ENCODE measurements at regions of chr7 and their contacts with region 1.

Region 1: GRCh38 chr7:56074371-56074791 is 10.3 kb downstream of the SUMF2 start:
- DNase-seq: peak; percentile 44
- H3K4me3 ChIP-seq: no peak overlapping the region
- H3K27ac ChIP-seq: no peak overlapping the region
- H3K27me3 ChIP-seq: no peaks in the 10 kb centered on the region
- CTCF ChIP-seq: peak; percentile 96

Region 2: GRCh38 chr7:55449205-55449991 is 625.0 kb before region 1 on chr7:
- CTCF ChIA-PET with region 1: no interaction called
- POLR2A ChIA-PET with region 1: no interaction called
- DNase-seq: no peak
- H3K4me3 ChIP-seq: no peak overlapping the region
- H3K27ac ChIP-seq: no peak overlapping the region
- H3K27me3 ChIP-seq: no peaks in the 10 kb centered on the region
- CTCF ChIP-seq: no peak

Region 3: GRCh38 chr7:55975988-55976633 is 98.3 kb before region 1 on chr7:
- CTCF ChIA-PET with region 1: interaction called, 15 read pairs
- POLR2A ChIA-PET with region 1: no interaction called
- DNase-seq: no peak
- H3K4me3 ChIP-seq: no peak overlapping the region
- H3K27ac ChIP-seq: no peak overlapping the region
- H3K27me3 ChIP-seq: no peaks in the 10 kb centered on the region
- CTCF ChIP-seq: no peak

Region 4: GRCh38 chr7:56019501-56019900 is 54.9 kb before region 1 on chr7:
- CTCF ChIA-PET with region 1: interaction called, 11 read pairs
- POLR2A ChIA-PET with region 1: no interaction called
- DNase-seq: no peak
- H3K4me3 ChIP-seq: no peak overlapping the region
- H3K27ac ChIP-seq: no peak overlapping the region
- H3K27me3 ChIP-seq: no peaks in the 10 kb centered on the region
- CTCF ChIP-seq: no peak

Region 5: GRCh38 chr7:56040734-56041133 is 33.6 kb before region 1 on chr7:
- CTCF ChIA-PET with region 1: interaction called, 13 read pairs
- POLR2A ChIA-PET with region 1: no interaction called
- DNase-seq: no peak
- H3K4me3 ChIP-seq: no peak overlapping the region
- H3K27ac ChIP-seq: peak overlapping the region; percentile 47
- H3K27me3 ChIP-seq: no peaks in the 10 kb centered on the region
- CTCF ChIP-seq: no peak

Region 6: GRCh38 chr7:56063882-56064625 is 10.3 kb before region 1 on chr7 and contains the start of gene SUMF2:
- CTCF ChIA-PET with region 1: interaction called, 55 read pairs
- POLR2A ChIA-PET with region 1: no interaction called
- DNase-seq: peak; percentile 58
- H3K4me3 ChIP-seq: peak within 1 kb of the TSS; percentile 94
- H3K27ac ChIP-seq: peak within 1 kb of the TSS; percentile 82
- H3K27me3 ChIP-seq: no peaks in the 10 kb centered on the region
- CTCF ChIP-seq: peak; percentile 18
- polyA plus RNA-seq, gene SUMF2: 95.4 and 102 TPM in 2 replicates

Region 7: GRCh38 chr7:56570968-56571367 is 496.6 kb after region 1 on chr7:
- CTCF ChIA-PET with region 1: no interaction called
- POLR2A ChIA-PET with region 1: no interaction called
- DNase-seq: no peak
- H3K4me3 ChIP-seq: no peak overlapping the region
- H3K27ac ChIP-seq: no peak overlapping the region
- H3K27me3 ChIP-seq: no peaks in the 10 kb centered on the region
- CTCF ChIP-seq: no peak